Right lobe of liver (tissue), 6 donors: ENCODE measurements at regions of chr2 and their contacts with region 1.

Region 1: GRCh38 chr2:158006961-158007719 is 94.5 kb upstream of the UPP2 start:
- DNase-seq: no peak
- ATAC-seq: no peak
- H3K4me3 ChIP-seq: no peak overlapping the region
- H3K27ac ChIP-seq: no peak overlapping the region
- H3K4me1 ChIP-seq: peaks cover 0 to 20% (median 4%) of the 10 kb centered on the region in 4 donors
- H3K27me3 ChIP-seq: no peaks in the 10 kb centered on the region
- CTCF ChIP-seq: no peak
- POLR2A ChIP-seq: no peak

Region 2: GRCh38 chr2:157509744-157510143 is 497.4 kb before region 1 on chr2:
- intact Hi-C with region 1: loop called in 1 of 2 experiments (anchors 10 kb)
- DNase-seq: no peak
- ATAC-seq: peak in 2 of 4 donors; percentile 39 to 44
- H3K4me3 ChIP-seq: no peak overlapping the region
- H3K27ac ChIP-seq: no peak overlapping the region
- H3K4me1 ChIP-seq: no peaks in the 10 kb centered on the region
- H3K27me3 ChIP-seq: no peaks in the 10 kb centered on the region
- CTCF ChIP-seq: peak; percentile 25 to 35 (median 32)
- POLR2A ChIP-seq: no peak

Region 3: GRCh38 chr2:157777427-157777826 is 229.7 kb before region 1 on chr2:
- intact Hi-C with region 1: loop called (anchors 10 kb)
- DNase-seq: no peak
- ATAC-seq: peak; percentile 53 to 65 (median 63)
- H3K4me3 ChIP-seq: no peak overlapping the region
- H3K27ac ChIP-seq: no peak overlapping the region
- H3K4me1 ChIP-seq: peaks cover 0 to 13% (median 6%) of the 10 kb centered on the region in 4 donors
- H3K27me3 ChIP-seq: no peaks in the 10 kb centered on the region
- CTCF ChIP-seq: peak; percentile 56 to 78 (median 68)
- POLR2A ChIP-seq: no peak

Region 4: GRCh38 chr2:157784169-157784822 is 222.8 kb before region 1 on chr2:
- intact Hi-C with region 1: loop called (anchors 10 kb)
- DNase-seq: peak; percentile 84 to 87 (median 84)
- ATAC-seq: peak; percentile 84 to 91 (median 88)
- H3K4me3 ChIP-seq: peak overlapping the region in 2 of 3 donors; percentile 17 to 24
- H3K27ac ChIP-seq: peak overlapping the region; percentile 78 to 87 (median 82)
- H3K4me1 ChIP-seq: peaks cover 0 to 60% (median 27%) of the 10 kb centered on the region in 4 donors
- H3K27me3 ChIP-seq: no peaks in the 10 kb centered on the region
- CTCF ChIP-seq: no peak
- POLR2A ChIP-seq: no peak

Region 5: GRCh38 chr2:158130832-158131473 is 123.8 kb after region 1 on chr2:
- intact Hi-C with region 1: no loop called
- DNase-seq: no peak
- ATAC-seq: peak; percentile 8 to 49 (median 20)
- H3K4me3 ChIP-seq: no peak overlapping the region
- H3K27ac ChIP-seq: peak overlapping the region; percentile 75 to 97 (median 95)
- H3K4me1 ChIP-seq: peaks cover 0 to 77% (median 27%) of the 10 kb centered on the region in 4 donors
- H3K27me3 ChIP-seq: no peaks in the 10 kb centered on the region
- CTCF ChIP-seq: no peak
- POLR2A ChIP-seq: no peak